ENCODE measurements at regions of chr5 and their contacts with region 1.

Region 1: GRCh38 chr5:181052672-181053487 is 12.8 kb downstream of the BTNL9 start:
- DNase-seq: peak; percentile 44
- H3K4me3 Mint-ChIP-seq: peak overlapping the region; percentile 67
- H3K27ac Mint-ChIP-seq: no peak overlapping the region
- H3K4me1 Mint-ChIP-seq: peaks cover 8% of the 10 kb centered on the region
- H3K27me3 Mint-ChIP-seq: peaks cover 71% of the 10 kb centered on the region

Region 2: DNA sequence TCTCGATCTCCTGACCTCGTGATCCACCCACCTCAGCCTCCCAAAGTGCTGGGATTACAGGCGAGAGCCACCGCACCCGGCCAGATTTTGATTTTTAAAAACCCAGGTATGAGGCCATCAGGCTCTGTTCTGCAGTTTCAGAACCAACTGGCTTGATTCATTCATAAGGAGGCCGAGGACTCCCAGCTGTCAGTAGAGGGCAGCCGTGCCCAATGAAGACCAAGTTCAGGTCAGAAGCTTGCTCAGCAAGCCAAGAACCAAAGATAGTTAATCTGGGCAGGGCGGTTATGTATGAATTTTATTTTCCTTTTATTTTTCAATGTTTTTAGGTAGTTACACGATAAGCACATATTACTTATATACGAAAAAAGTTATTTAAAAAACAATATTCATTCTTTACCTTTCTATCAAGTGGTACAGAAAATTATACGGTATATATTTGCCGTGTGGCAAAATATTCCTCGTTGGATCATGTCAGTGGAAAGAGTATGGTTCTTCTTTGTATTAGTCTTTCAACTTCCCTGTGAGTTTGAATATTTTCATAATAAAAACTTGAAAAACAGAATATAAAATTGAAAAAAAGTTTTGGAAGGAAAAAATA is 268.3 kb before region 1 on chr5:
- CTCF ChIA-PET with region 1: no interaction called
- intact Hi-C with region 1: loop called (anchors 5 kb)
- DNase-seq: peak; percentile 89
- H3K4me3 Mint-ChIP-seq: no peak overlapping the region
- H3K27ac Mint-ChIP-seq: no peak overlapping the region
- H3K4me1 Mint-ChIP-seq: peaks cover 20% of the 10 kb centered on the region
- H3K27me3 Mint-ChIP-seq: no peaks in the 10 kb centered on the region

Region 3: GRCh38 chr5:181037365-181037861 is 15.5 kb before region 1 on chr5:
- CTCF ChIA-PET with region 1: no interaction called
- intact Hi-C with region 1: no loop called
- DNase-seq: no peak
- H3K4me3 Mint-ChIP-seq: no peak overlapping the region
- H3K27ac Mint-ChIP-seq: no peak overlapping the region
- H3K4me1 Mint-ChIP-seq: no peaks in the 10 kb centered on the region
- H3K27me3 Mint-ChIP-seq: peaks cover 22% of the 10 kb centered on the region

Measured in activated naive CD4-positive, alpha-beta T cell treated with anti-CD3 and anti-CD28 coated beads for 36 hours (primary cell).